Posterior vena cava (tissue), 2 donors: ENCODE measurements at regions of chr21 and their contacts with region 1.

Region 1: GRCh38 chr21:34029743-34030528 is 43.4 kb upstream of the MRPS6 start:
- DNase-seq: no peak

Region 2: DNA sequence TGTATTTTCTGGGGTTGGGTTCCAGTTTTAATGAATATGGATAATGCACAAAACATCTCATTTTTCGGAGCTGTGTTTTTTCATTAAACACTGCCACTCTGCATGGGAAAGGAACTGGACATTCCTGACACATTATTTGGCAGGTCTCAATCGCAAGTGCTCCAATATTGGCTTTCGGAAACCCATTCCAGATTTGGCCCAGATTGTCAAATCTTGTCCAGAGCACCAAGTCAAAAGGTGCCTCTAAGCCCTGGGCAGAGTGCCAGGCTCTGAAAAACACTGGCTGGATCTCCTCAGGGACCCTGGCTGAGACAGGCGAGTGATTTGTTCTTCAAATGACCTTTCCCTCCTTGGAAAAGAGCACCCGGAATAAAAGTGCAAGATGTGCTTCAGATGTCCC is 25.0 kb before region 1 on chr21:
- intact Hi-C with region 1: loop called in 1 of 2 experiments (anchors 1 kb)
- DNase-seq: no peak

Region 3: DNA sequence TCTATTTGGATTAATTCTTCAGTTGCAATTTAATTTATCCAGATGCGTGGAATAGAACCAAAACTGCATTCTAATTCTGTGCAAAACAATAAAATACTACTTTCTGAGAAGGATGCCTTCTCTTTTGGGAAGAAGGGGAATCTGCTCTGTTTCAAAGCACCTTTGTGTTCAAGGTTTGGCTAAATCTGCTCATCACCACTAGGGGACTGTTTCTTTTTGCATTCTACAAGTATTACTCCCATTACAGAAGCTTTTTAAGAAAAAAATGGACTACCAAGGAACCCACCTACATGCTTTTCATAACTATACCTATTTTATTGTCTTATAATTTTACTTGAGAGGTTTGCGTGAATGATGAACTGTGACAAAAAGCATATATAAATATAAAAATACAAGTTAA is 61.7 kb after region 1 on chr21:
- intact Hi-C with region 1: no loop called
- DNase-seq: no peak